ENCODE measurements at regions of chr10 and their contacts with region 1.

Region 1: GRCh38 chr10:17200912-17201793 is at the start of gene TRDMT1:
- DNase-seq: peak; percentile 69
- ATAC-seq: peak; percentile 99
- H3K4me3 ChIP-seq: peak within 1 kb of the TSS; percentile 68 to 85
- H3K27ac ChIP-seq: peak within 1 kb of the TSS; percentile 74
- H3K4me1 ChIP-seq: peaks cover 5 to 14% of the 10 kb centered on the region in 2 experiments
- H3K27me3 ChIP-seq: no peaks in the 10 kb centered on the region
- CTCF ChIP-seq: peak in 1 of 3 experiments; percentile 17; a peak in 1 of 6 replicates
- POLR2A ChIP-seq: peak; percentile 65
- RAD21 ChIP-seq: peak; percentile 54; the same call in 1 of the 2 replicates
- total RNA-seq, gene TRDMT1: 8.6 TPM

Region 2: DNA sequence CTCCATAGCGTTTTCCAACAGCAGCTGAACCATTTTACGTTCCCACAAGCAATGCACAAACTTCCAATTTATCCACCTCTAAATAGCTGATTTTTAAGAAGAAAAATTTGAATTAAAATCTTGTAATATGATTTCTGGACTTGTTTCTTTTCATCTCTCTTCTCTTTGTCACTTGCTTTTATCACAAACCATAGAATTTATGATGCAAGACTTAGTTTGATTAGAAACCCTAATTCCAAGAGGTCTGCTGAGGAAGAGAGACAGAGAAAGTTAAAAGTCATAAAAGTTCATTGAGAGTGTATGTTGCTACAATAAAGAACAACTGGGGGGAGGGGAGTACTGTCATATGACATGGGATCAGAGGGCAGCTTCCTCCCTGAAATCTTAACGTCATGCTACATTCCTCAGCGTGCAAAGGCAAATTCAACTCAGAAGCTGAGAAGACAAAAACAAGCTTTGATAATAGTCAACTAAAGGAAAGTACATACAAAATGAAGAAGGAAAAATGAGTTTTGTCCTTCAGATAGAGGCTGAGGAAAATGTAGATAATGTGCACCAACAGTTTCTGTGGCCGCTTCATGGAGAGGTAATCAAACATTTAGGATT is 53.2 kb before region 1 on chr10:
- CTCF ChIA-PET with region 1: no interaction called
- POLR2A ChIA-PET with region 1: no interaction called
- RAD21 ChIA-PET with region 1: no interaction called
- intact Hi-C with region 1: no loop called
- DNase-seq: no peak
- ATAC-seq: no peak
- H3K4me3 ChIP-seq: no peak overlapping the region
- H3K27ac ChIP-seq: no peak overlapping the region
- H3K4me1 ChIP-seq: no peaks in the 10 kb centered on the region
- H3K27me3 ChIP-seq: no peaks in the 10 kb centered on the region
- CTCF ChIP-seq: no peak
- POLR2A ChIP-seq: no peak
- RAD21 ChIP-seq: no peak

Region 3: DNA sequence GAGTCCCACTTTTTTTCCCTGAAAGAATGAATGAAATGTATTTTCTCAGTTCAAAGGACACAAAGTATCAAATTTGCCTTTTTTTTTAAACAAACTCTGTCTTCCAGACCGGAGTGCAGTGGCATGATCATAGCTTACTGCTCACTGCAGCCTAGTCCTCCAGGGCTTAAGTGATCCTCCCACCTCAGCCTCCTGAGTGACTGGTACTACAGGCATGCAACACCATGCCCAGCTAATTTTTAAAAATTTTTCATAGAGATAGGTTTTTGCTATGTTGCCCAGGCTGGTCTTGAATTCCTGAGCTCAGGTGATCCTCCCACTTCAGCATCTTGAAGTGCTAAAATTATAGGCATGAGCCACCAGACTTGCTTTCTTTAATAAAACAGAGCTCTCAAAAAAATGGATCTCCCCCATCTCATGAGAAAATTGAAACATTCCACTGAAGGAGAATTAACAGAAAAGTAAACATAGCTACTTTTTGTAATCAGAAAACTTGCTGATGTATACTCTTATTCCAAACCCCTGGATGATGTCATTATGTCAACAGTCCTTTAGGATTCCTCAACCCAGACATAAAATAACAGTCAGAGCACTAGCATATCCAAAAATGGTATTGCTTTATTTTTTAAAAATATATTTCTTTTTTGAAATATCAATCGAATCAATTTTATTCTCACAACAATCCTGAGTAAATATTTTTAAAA is 12.6 kb after region 1 on chr10:
- CTCF ChIA-PET with region 1: no interaction called
- POLR2A ChIA-PET with region 1: interaction called, 13 read pairs
- RAD21 ChIA-PET with region 1: no interaction called
- intact Hi-C with region 1: no loop called
- DNase-seq: no peak
- ATAC-seq: no peak
- H3K4me3 ChIP-seq: no peak overlapping the region
- H3K27ac ChIP-seq: no peak overlapping the region
- H3K4me1 ChIP-seq: peaks cover 24 to 35% of the 10 kb centered on the region in 2 experiments
- H3K27me3 ChIP-seq: no peaks in the 10 kb centered on the region
- CTCF ChIP-seq: no peak
- POLR2A ChIP-seq: no peak
- RAD21 ChIP-seq: no peak

Measured in HCT116 (cell line).